Thyroid gland (tissue), 4 donors: ENCODE measurements at regions of chr14 and their contacts with region 1.

Region 1: DNA sequence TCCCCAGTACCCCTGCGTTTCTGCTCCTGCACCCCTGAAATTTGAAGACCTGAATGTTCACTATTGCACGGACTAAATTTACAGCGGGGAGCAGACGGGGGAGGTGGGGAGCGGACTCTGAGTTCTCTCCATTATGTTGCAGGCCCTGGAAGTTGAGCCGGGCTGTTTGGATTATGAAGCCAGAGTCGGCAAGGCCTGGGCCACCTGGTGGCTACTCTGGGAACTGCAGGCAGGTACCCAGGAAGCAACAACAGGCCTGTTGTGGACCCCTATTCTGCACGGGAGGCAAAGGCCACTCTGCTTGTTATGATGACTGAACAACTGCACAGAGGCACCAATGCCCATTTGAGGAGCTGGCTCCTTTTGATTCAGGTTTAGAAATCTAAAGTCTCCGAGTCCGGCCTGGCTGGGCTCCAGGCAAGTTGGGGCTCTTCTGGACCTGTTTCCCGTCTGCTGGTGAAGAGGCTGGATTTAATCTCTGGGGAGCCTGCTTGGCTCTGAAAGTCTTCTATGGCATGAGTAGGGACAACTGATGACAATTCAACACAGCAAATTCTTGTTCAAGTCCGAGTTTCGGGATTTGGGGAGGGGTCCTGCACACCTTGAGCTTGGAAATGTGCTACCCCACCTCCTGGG is 34.1 kb upstream of the FAM181A start:
- DNase-seq: peak; percentile 75
- H3K4me3 ChIP-seq: no peak overlapping the region
- H3K27ac ChIP-seq: no peak overlapping the region
- H3K4me1 ChIP-seq: no peaks in the 10 kb centered on the region
- H3K27me3 ChIP-seq: no peaks in the 10 kb centered on the region
- CTCF ChIP-seq: peak; percentile 88 to 97 (median 90)
- POLR2A ChIP-seq: no peak

Region 2: GRCh38 chr14:93788543-93789227 is 104.4 kb before region 1 on chr14:
- intact Hi-C with region 1: loop called (anchors 10 kb)
- DNase-seq: peak; percentile 59 to 62
- H3K4me3 ChIP-seq: peak overlapping the region in 2 of 3 donors; percentile 41 to 54
- H3K27ac ChIP-seq: peak overlapping the region in 1 of 3 donors; percentile 49
- H3K4me1 ChIP-seq: peaks cover 5 to 13% of the 10 kb centered on the region in 2 donors
- H3K27me3 ChIP-seq: no peaks in the 10 kb centered on the region
- CTCF ChIP-seq: peak in 4 of 6 experiments; percentile 15 to 66 (median 40)
- POLR2A ChIP-seq: peak in 1 of 2 donors; percentile 61

Region 3: GRCh38 chr14:93847473-93847872 is 45.6 kb before region 1 on chr14:
- intact Hi-C with region 1: no loop called
- DNase-seq: no peak
- H3K4me3 ChIP-seq: no peak overlapping the region
- H3K27ac ChIP-seq: no peak overlapping the region
- H3K4me1 ChIP-seq: no peaks in the 10 kb centered on the region
- H3K27me3 ChIP-seq: no peaks in the 10 kb centered on the region
- CTCF ChIP-seq: no peak
- POLR2A ChIP-seq: no peak